ENCODE measurements at regions of chr4 and their contacts with region 1.

Region 1: DNA sequence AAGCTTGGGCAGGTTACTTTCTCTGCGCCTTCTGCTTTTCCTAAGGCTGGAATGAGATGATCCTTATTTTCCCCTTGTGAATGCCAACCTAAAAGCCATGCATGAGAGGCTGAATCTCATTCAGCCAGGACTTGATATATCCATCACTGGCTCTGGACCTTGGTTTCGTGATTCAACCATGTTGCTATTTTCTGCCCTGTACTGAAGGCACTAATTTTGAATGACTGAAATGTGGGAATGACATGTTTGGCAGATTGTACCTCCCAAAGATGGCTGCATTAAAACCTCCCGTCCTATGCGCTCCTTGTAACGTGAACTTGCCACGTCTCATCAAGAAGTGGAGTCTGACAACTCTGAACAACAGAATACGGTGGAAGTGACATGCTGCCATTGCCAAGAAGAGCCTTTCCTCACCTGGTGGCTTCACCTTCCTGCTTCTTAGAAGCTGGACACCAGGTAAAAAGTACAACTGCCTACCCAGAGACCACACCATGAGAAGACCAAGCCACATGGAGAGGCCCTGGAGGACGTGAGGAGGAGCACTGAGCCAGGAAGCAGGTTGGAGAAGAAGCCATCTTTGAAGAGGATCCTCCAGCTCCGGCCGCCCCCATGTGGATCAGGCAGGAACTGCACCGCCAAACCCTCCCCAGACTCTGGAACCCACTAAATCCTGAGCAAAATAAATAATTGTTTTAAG is 174.5 kb downstream of the NSUN7 start:
- DNase-seq: no peak
- H3K4me3 ChIP-seq: no peak overlapping the region
- H3K27ac ChIP-seq: no peak overlapping the region
- H3K27me3 ChIP-seq: no peaks in the 10 kb centered on the region
- CTCF ChIP-seq: peak; percentile 97

Region 2: GRCh38 chr4:40682290-40683101 is 241.7 kb before region 1 on chr4:
- CTCF ChIA-PET with region 1: no interaction called
- POLR2A ChIA-PET with region 1: no interaction called
- DNase-seq: no peak
- H3K4me3 ChIP-seq: no peak overlapping the region
- H3K27ac ChIP-seq: no peak overlapping the region
- H3K27me3 ChIP-seq: no peaks in the 10 kb centered on the region
- CTCF ChIP-seq: no peak

Region 3: DNA sequence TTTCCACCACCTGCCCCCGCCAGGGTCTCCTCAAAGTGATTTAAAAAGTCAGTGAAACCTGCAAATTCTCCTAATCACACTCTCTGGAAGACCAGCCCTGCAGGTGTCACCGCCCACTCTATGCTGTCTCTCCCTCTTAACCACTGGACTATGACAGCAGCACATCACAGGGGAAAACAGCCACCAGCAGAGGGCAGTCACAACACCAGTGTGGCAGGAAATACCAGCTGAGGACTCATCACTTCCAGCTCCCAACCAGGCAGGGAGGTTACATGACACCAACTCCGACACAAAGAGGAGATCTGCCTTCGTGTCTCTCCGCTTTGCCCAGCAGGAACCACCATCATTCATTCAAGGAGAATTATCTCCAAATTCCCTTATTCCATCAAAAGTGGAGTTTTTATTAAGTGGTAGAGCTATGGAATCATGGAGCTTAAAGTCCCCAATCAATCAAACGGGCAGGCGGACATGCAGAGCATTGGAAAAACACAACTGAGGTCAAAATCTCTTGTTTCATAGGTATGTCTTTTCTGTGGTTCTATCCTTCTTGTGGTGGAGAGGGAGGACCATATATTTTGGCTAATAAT is 83.2 kb before region 1 on chr4:
- CTCF ChIA-PET with region 1: interaction called, 24 read pairs
- POLR2A ChIA-PET with region 1: no interaction called
- DNase-seq: peak; percentile 68
- H3K4me3 ChIP-seq: no peak overlapping the region
- H3K27ac ChIP-seq: no peak overlapping the region
- H3K27me3 ChIP-seq: no peaks in the 10 kb centered on the region
- CTCF ChIP-seq: peak; percentile 79

Region 4: GRCh38 chr4:40940317-40940741 is 16.1 kb after region 1 on chr4:
- CTCF ChIA-PET with region 1: interaction called, 37 read pairs
- POLR2A ChIA-PET with region 1: no interaction called
- DNase-seq: no peak
- H3K4me3 ChIP-seq: no peak overlapping the region
- H3K27ac ChIP-seq: no peak overlapping the region
- H3K27me3 ChIP-seq: no peaks in the 10 kb centered on the region
- CTCF ChIP-seq: no peak

Region 5: DNA sequence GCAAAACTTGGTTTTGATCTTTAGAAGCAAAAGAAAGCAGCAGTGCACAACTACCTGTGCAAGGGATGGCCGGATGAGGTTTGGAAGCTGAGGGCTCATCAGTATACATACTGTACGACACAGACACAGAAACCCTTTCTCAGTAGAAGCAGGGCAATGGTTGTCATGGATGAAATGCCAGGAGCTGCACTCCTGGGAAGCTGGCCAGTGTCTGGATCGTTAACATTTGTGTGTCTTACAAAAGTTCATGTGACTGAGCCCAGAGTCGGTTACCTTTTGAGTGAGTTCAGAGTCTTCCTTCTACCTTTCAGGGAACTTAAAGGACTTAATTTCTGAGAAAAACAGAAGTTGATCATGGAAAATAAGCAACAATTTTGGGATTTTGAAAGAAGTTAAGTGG is 59.8 kb after region 1 on chr4:
- CTCF ChIA-PET with region 1: interaction called, 11 read pairs
- POLR2A ChIA-PET with region 1: no interaction called
- DNase-seq: no peak
- H3K4me3 ChIP-seq: no peak overlapping the region
- H3K27ac ChIP-seq: no peak overlapping the region
- H3K27me3 ChIP-seq: no peaks in the 10 kb centered on the region
- CTCF ChIP-seq: no peak

Region 6: DNA sequence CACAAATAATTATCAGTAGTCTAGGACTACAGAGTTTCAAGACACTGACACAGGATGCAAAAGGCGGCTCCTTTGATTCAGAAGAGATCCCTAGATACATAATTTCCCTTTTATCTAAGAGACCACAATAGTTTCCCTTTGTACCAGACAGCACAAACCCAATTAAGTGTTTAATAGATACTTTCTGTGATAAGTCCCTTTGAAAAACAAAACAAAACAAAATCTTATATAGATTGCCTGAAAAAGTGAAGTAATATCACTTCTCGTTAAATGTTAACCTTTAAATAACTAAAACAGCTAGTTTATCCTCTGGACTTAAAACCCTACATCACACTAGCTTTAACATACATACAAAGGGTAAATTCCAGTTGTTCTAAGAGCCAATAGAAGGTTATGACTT is 240.2 kb after region 1 on chr4:
- CTCF ChIA-PET with region 1: no interaction called
- POLR2A ChIA-PET with region 1: no interaction called
- DNase-seq: no peak
- H3K4me3 ChIP-seq: no peak overlapping the region
- H3K27ac ChIP-seq: no peak overlapping the region
- H3K27me3 ChIP-seq: no peaks in the 10 kb centered on the region
- CTCF ChIP-seq: no peak

Region 7: DNA sequence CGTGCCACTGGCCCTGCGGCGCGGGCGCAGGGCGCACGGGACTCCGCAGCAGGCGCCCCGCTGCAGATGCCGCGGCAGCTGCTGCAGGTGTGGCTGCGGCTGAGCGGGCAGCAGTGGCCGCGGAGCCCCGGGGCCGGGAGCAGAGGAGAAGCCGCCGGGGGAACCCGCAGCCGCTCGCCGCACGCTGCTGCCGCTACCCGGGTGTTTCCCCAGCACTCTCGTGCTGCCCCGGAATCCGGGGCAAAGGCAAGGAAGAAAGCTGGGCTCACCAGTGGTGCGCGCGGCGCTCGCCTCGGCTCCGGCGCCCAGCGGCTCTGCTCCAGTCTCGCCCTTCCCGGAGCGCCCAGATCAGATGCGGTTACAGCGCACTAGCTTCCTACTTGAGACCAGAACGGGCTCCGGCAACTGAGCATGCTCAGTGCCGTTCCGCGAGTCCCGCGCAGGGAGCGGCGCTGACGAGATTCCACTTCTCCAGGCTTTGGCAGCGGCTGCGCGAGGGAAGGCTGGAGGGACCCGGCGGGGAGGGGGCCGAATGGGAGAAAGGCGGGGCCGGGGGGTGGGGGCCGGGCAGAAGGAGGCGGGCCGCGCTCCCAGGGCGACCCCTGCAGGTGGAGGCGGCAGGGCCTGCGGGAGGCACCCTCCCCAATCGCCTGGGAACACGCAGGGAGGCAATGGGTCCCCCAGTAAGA is 290.0 kb after region 1 on chr4 and contains the start of gene APBB2:
- CTCF ChIA-PET with region 1: interaction called, 100 read pairs
- POLR2A ChIA-PET with region 1: interaction called, 10 read pairs
- DNase-seq: peak; percentile 96
- H3K4me3 ChIP-seq: peak within 1 kb of the TSS; percentile 93
- H3K27ac ChIP-seq: peak within 1 kb of the TSS; percentile 65
- H3K27me3 ChIP-seq: no peaks in the 10 kb centered on the region
- CTCF ChIP-seq: peak; percentile 74
- polyA plus RNA-seq, gene APBB2: 52.7 and 52.8 TPM in 2 replicates

Region 8: GRCh38 chr4:41245983-41246382 is 321.7 kb after region 1 on chr4:
- CTCF ChIA-PET with region 1: interaction called, 12 read pairs
- POLR2A ChIA-PET with region 1: no interaction called
- DNase-seq: no peak
- H3K4me3 ChIP-seq: no peak overlapping the region
- H3K27ac ChIP-seq: no peak overlapping the region
- H3K27me3 ChIP-seq: peaks cover 17% of the 10 kb centered on the region
- CTCF ChIP-seq: no peak